ENCODE measurements at regions of chr11 and their contacts with region 1.

Region 1: DNA sequence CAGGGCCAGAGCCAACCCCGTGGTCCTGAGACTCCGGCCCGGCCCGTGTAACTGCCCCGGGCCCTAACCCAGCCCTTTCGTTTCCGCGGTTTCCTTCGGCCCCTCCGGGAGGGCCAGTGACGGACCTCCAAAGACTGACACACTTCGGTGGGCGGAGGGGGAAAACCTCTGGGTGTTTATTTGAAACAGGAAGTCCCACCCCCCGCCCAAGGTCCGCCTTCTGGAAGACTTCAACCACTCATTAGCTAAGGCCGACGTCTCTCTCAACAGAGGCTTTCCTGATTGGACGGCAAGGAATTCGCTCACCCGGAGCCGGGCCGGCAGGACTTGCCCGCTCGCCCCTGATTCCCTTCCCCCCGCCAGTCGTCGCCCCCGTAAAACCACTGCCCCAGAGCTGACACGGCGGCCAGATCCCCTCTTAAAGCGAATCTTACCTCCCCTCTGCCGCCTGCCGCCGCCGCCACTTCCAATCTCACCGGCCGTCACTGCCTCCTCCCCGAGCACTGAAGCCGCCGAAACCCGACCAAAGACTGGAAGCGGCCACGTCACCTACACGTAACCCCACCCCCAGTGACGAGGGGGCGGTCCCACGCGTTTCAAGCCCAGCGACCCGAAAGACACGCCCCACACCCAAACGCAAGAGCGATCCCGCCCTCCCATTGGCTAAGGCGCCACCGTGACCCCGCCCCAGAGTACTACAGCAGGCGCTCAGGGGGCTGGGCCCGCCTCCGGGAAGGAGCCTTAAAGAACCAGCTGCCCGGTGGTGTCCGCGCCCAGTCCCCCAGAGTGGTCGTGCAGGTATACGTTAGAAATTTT is at the start of gene STX5:
- DNase-seq: peak; percentile 99 to 100 (median 99)
- ATAC-seq: peak; percentile 95
- H3K4me3 ChIP-seq: peak within 1 kb of the TSS; percentile 86
- H3K4me3 Mint-ChIP-seq: peak within 1 kb of the TSS; percentile 92
- H3K27ac ChIP-seq: peak within 1 kb of the TSS; percentile 95 to 97
- H3K27ac Mint-ChIP-seq: peak within 1 kb of the TSS; percentile 95
- H3K4me1 ChIP-seq: peaks cover 44% of the 10 kb centered on the region
- H3K4me1 Mint-ChIP-seq: peaks cover 40% of the 10 kb centered on the region
- H3K27me3 ChIP-seq: no peaks in the 10 kb centered on the region
- H3K27me3 Mint-ChIP-seq: no peaks in the 10 kb centered on the region
- CTCF ChIP-seq: no peak
- total RNA-seq, gene STX5: 93.1 to 104 TPM

Region 2: GRCh38 chr11:62771144-62772021 is 60.3 kb before region 1 on chr11 and contains the start of gene TAF6L:
- CTCF ChIA-PET with region 1: no interaction called
- POLR2A ChIA-PET with region 1: interaction called, 12 read pairs
- intact Hi-C with region 1: no loop called
- DNase-seq: peak; percentile 81 to 95 (median 88)
- ATAC-seq: peak; percentile 76
- H3K4me3 ChIP-seq: peak within 1 kb of the TSS; percentile 76
- H3K4me3 Mint-ChIP-seq: peak within 1 kb of the TSS; percentile 97
- H3K27ac ChIP-seq: peak within 1 kb of the TSS; percentile 79 to 88
- H3K27ac Mint-ChIP-seq: peak within 1 kb of the TSS; percentile 97
- H3K4me1 ChIP-seq: peaks cover 27% of the 10 kb centered on the region
- H3K4me1 Mint-ChIP-seq: peaks cover 24% of the 10 kb centered on the region
- H3K27me3 ChIP-seq: no peaks in the 10 kb centered on the region
- H3K27me3 Mint-ChIP-seq: no peaks in the 10 kb centered on the region
- CTCF ChIP-seq: no peak
- total RNA-seq, gene TAF6L: 11.5 to 11.8 TPM

Region 3: DNA sequence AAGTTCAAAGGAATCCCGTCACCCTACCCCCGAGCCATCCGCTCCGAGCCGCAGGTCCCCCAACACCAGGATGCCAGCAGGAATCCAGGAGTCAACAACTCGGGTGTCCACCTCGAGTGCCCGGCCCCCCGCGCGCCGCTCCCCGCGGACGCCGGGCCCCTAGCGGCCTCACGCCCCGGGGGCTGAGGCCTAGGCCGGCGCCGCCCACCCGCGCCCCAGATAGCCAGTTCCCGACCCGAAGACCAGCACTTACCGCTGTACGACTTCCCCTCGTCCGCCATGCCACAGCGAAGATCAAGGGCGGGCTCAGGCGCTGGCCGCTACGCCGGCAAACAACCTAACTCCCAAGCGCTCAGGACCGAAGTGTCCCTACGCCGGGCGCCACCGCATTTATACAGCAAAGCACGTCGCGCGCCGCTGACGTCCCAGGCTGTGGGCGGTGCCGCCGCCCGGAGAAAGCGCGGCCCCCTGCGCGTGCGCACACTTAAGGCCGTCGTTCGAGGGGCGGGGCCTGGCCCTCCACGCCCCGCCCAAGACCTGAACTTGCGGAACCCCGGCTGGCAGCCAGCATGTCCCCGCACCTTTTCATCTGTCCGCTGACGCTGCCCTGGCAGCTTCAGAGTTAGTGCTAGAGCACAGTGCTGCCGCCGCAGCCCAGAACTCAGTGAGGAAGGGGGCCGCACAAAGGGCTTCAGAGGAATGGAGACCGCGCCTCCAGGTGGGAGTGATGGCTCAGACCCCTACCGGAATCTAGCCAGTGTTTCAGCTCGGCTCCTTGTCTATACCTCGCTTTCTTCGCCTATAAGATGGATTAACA is 26.4 kb before region 1 on chr11 and contains the start of gene NXF1:
- CTCF ChIA-PET with region 1: no interaction called
- POLR2A ChIA-PET with region 1: interaction called, 19 read pairs
- intact Hi-C with region 1: loop called in 1 of 2 experiments (anchors 2 kb)
- DNase-seq: peak; percentile 88 to 98 (median 96)
- ATAC-seq: peak; percentile 82
- H3K4me3 ChIP-seq: peak within 1 kb of the TSS; percentile 70
- H3K4me3 Mint-ChIP-seq: peak within 1 kb of the TSS; percentile 98
- H3K27ac ChIP-seq: peak within 1 kb of the TSS; percentile 60 to 83
- H3K27ac Mint-ChIP-seq: peak within 1 kb of the TSS; percentile 97
- H3K4me1 ChIP-seq: peaks cover 36% of the 10 kb centered on the region
- H3K4me1 Mint-ChIP-seq: peaks cover 41% of the 10 kb centered on the region
- H3K27me3 ChIP-seq: no peaks in the 10 kb centered on the region
- H3K27me3 Mint-ChIP-seq: no peaks in the 10 kb centered on the region
- CTCF ChIP-seq: no peak
- total RNA-seq, gene NXF1: 343 to 358 TPM

Region 4: DNA sequence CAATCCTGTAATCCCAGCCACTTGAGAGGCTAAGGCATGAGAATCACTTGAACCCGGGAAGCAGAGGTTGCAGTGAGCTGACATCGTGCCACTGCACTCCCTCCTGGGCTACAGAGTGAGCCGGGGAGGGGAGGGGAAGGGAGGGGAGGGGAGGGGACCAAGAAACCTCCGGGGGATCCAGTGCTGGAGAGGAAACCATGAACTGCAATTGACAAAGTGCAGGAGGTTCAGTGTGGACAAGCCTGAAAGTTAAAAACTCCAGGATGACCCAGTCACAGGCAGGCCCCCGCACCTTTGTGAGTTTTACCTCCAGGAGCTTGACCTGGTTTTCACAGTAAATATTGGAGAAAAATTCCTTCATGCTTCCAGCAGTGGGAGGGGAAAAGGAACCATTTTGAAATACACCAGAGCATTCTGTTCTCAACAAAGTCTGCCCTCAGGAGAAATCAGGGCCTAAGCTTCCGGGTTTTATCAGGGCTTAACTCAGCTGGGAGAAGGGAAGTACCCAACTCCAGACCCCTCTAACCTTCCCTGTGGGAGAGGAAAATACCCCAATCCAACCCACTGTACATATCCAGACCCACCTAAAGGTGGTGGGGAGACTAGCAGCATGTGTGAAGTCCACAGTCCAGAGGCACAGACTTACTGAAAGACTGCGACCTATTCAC is 952.3 kb after region 1 on chr11:
- CTCF ChIA-PET with region 1: no interaction called
- POLR2A ChIA-PET with region 1: no interaction called
- intact Hi-C with region 1: no loop called
- DNase-seq: no peak
- ATAC-seq: no peak
- H3K4me3 ChIP-seq: no peak overlapping the region
- H3K4me3 Mint-ChIP-seq: no peak overlapping the region
- H3K27ac ChIP-seq: no peak overlapping the region
- H3K27ac Mint-ChIP-seq: no peak overlapping the region
- H3K4me1 ChIP-seq: no peaks in the 10 kb centered on the region
- H3K4me1 Mint-ChIP-seq: no peaks in the 10 kb centered on the region
- H3K27me3 ChIP-seq: no peaks in the 10 kb centered on the region
- H3K27me3 Mint-ChIP-seq: no peaks in the 10 kb centered on the region
- CTCF ChIP-seq: no peak